ENCODE measurements at regions of chr17 and their contacts with region 1.

Region 1: GRCh38 chr17:72270273-72270950 is 149.6 kb downstream of the SOX9 start:
- DNase-seq: peak; percentile 85
- H3K4me3 ChIP-seq: no peak overlapping the region
- H3K27ac ChIP-seq: no peak overlapping the region
- H3K4me1 ChIP-seq: peaks cover 39% of the 10 kb centered on the region
- H3K27me3 ChIP-seq: no peaks in the 10 kb centered on the region
- CTCF ChIP-seq: no peak

Region 2: DNA sequence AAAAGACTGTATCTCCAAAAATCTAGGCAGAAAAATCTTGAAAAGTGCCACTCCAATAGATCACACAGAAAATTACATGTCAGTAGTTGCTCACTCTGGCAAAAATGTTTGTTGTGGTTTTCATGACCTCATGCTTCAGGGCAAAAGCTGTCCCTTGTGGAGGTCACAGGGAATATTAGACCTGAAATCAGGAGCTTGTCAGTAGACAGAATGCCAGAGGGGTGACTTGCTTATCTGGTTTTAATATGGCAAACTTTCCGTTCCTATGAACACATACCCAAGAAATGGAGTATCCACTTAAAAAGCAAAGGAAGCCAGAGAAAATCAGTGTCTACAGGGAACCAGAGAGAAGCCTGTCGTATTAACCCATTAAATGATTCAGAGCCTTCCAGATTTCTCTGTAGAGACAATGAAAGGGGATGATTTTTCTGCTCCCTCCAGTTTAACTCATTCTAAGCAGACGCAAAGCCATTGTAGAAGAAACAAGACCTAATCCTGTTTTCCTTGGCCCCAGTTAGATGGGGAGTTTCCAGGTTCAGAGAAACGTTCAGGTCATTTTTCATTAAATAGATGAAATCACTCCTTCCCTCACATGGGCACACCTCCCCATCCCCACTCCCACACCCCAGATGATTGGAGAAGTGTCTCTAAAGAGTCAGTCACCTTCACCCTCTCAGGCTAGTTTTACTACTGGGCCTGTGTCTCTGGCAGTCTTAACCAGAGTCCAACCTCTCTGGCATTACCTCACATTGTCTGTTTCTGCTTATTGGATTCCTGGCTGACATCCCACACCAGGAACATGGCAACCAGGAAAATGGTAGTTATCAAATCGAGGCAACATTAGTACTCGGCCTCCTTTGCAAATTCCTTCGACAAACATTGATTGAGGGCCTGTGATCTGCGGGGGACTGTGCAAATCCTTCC is 143.6 kb before region 1 on chr17:
- CTCF ChIA-PET with region 1: no interaction called
- dilution Hi-C with region 1: no loop called
- in situ Hi-C with region 1: no loop called
- intact Hi-C with region 1: loop called (anchors 5 kb)
- DNase-seq: peak; percentile 88
- H3K4me3 ChIP-seq: no peak overlapping the region
- H3K27ac ChIP-seq: peak overlapping the region; percentile 36
- H3K4me1 ChIP-seq: peaks cover 33% of the 10 kb centered on the region
- H3K27me3 ChIP-seq: no peaks in the 10 kb centered on the region
- CTCF ChIP-seq: no peak

Region 3: DNA sequence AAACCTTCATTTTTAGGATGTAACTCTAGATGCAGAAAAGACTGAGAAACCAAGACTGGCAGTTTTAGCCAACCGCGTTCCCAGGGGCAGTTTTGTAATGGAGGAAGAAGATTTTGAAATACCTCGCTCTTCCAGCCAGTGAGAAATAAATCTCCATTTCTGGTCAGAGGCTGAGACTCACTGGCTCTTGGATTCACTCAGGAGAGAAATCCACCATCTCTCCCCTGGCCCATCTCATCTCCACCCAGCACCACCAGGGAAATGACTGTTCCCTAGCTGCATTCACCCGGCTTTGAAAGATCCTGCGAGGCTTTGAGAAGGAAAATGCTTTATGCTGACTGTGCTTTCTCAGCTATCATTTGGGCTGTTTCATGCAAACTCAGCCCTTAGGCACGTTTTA is 35.6 kb after region 1 on chr17:
- CTCF ChIA-PET with region 1: no interaction called
- dilution Hi-C with region 1: no loop called
- in situ Hi-C with region 1: no loop called
- intact Hi-C with region 1: no loop called
- DNase-seq: no peak
- H3K4me3 ChIP-seq: no peak overlapping the region
- H3K27ac ChIP-seq: no peak overlapping the region
- H3K4me1 ChIP-seq: no peaks in the 10 kb centered on the region
- H3K27me3 ChIP-seq: peaks cover 2% of the 10 kb centered on the region
- CTCF ChIP-seq: no peak

Region 4: DNA sequence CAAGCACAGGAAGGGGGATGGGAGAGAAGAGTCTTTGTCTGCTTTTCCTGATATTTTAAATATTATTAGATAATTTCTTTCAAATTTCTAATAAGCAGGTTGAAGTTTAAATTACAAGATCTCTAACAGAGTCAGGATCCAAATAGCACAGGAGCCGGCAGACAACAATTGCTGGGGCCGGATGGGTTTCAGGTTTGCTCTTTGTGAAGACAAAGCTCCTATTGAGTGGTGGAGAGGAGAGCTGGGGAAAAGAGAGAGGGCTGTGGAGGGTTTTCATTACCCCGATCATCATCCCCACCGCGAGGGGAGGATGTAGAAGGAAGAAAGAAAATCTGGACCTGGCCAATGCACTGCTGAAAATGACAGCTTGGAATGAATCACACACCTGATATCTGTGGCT is 47.7 kb after region 1 on chr17:
- CTCF ChIA-PET with region 1: no interaction called
- dilution Hi-C with region 1: no loop called
- in situ Hi-C with region 1: no loop called
- intact Hi-C with region 1: no loop called
- DNase-seq: no peak
- H3K4me3 ChIP-seq: no peak overlapping the region
- H3K27ac ChIP-seq: no peak overlapping the region
- H3K4me1 ChIP-seq: no peaks in the 10 kb centered on the region
- H3K27me3 ChIP-seq: no peaks in the 10 kb centered on the region
- CTCF ChIP-seq: no peak

Region 5: DNA sequence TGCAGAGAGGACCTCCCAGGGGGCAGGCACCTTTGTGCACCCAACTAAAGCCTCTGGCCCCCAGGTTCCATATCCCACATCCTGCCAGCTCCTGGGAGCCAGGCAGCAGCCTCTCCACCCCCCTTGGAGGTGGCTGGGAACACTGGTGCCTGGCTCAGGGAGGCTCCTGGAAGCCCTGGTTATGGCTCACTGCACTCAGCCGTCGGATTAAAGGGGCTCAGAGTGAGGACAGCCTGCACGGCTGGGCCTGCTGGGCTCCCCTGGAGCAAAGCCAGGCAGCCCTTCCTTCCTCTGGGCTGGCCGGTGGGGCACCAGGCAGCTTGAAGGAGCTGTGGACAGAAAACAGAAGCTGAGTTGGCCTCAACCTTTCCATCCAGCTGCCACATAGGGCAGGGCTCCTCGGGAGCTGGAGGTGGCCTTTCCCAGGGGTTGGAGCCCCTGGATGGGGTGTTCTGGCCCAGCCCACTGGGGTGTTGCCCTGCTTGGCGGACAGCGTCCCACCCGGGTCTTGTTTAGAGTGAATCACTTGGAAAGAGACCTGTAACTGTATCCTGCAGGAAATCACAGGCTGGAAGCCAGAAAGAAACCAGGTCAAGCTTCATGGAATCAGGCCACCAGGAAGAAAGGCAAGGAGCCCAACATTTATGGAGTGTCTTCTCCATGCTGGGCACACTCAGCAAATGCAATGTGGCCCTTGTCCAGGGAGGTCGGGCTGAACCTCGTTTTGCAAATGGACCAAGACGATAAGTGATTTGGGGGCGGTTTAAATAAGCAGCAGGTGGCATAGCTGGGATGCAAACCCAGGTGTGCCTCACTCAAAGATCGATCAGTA is 103.7 kb after region 1 on chr17:
- CTCF ChIA-PET with region 1: no interaction called
- dilution Hi-C with region 1: no loop called
- in situ Hi-C with region 1: no loop called
- intact Hi-C with region 1: no loop called
- DNase-seq: no peak
- H3K4me3 ChIP-seq: no peak overlapping the region
- H3K27ac ChIP-seq: no peak overlapping the region
- H3K4me1 ChIP-seq: peaks cover 3% of the 10 kb centered on the region
- H3K27me3 ChIP-seq: no peaks in the 10 kb centered on the region
- CTCF ChIP-seq: no peak